Head of caudate nucleus (tissue), 42 donors: ENCODE measurements at regions of chr16 and their contacts with region 1.

Region 1: DNA sequence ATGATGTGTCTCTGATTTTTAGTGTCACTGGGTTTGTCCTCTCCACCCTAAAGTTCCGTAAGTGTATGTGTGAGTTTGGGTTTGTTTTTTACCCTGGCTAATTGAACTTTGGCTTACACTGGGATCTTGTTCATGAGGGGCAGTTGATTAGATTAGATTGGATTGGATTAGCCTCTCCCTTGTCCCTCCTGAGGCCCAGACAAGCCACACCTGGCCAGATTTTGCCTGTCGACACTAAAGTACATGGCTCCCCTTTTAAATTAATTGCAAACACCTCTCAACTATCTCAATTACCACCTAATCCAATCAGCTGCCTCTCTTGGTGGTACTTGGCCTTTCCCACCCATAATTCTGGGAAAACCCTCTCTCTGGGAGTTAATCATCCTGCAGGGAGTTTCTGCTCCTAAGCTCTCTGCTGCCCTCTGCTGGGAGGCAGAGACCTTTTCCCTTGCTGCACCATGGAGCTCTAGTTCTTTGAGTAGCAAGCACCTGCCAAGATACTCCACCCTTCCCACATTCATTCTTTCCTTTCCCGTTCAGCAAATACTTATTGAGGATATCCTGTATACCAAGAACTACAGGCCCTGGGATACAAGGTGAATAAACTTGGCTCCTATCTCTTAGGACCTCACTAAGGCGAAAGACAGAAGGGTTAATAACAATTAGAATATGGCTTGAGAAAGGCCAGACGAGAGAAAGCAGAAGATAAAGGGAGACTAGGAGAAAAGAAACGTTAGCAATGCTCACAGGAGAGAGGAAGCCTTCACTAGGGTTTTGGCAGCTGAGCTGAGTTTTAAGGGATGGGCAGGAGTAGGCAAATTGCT is 60.0 kb upstream of the MPHOSPH6 start:
- DNase-seq: peak; percentile 48 to 93 (median 82)

Region 2: GRCh38 chr16:81940781-81941560 is 289.0 kb before region 1 on chr16:
- intact Hi-C with region 1: loop called (anchors 5 kb)
- DNase-seq: peak in 1 of 42 donors; percentile 3

Region 3: GRCh38 chr16:82031116-82032084 is 198.6 kb before region 1 on chr16:
- intact Hi-C with region 1: loop called (anchors 5 kb)
- DNase-seq: peak in 8 of 42 donors; percentile 10 to 65 (median 28)

Region 4: GRCh38 chr16:82093666-82094300 is 136.2 kb before region 1 on chr16:
- intact Hi-C with region 1: no loop called
- DNase-seq: no peak